ENCODE measurements at regions of chr16 and their contacts with region 1.

Region 1: GRCh38 chr16:3123986-3124886 is 10.6 kb upstream of the ZNF213 start:
- DNase-seq: peak; percentile 92

Region 2: GRCh38 chr16:3112058-3112880 is 12.0 kb before region 1 on chr16 and contains the start of gene ZNF205:
- CTCF ChIA-PET with region 1: interaction called, 10 read pairs
- POLR2A ChIA-PET with region 1: interaction called, 16 read pairs
- DNase-seq: peak; percentile 84

Region 3: DNA sequence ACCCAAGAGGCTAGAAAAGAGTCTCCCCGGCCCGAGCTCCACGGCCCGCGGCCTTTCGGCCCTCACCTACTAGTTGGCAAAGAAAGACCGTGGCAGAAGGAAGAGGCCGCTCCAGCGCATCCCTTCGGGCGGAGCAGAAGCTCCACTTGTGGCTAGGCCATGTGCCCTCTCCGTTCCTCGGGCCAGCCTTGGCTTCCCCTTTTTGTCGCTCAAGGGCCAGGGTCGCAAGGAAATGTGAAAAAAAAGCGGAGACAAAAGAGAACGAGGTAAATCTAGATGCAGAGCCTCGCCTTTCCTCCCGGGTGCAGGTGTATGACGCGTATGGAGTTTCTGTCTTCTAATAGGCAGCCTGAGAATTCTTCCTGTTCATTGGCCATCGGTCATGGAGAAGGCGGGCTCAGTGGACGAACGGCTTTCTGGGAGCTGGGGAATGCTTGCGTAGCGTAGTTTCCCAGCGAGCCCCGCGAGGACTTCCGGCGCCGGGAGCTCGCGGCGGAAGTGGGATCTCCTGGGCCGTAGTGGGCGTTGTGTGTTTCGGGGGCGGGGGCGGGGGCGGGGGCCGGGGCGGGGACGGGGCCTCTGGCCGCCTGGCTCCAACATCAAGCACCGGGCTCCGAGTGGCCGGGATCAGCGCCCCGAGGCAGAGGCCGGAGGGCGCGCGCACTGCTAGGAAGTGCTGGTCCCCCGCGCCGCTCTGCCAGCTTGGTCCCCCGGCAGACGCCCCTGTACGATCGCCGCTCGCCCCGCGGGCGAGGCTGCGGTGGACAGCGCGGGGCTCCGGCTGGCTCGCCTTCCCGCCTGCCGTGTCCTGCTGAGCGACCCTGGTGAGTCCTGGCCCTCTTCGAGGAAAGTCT is 10.6 kb after region 1 on chr16 and contains the start of gene ZNF213:
- CTCF ChIA-PET with region 1: interaction called, 4 read pairs
- POLR2A ChIA-PET with region 1: interaction called, 14 read pairs
- DNase-seq: peak; percentile 90

Measured in HEK293T (cell line).